Caco-2 (cell line): ENCODE measurements at regions of chr5 and their contacts with region 1.

Region 1: DNA sequence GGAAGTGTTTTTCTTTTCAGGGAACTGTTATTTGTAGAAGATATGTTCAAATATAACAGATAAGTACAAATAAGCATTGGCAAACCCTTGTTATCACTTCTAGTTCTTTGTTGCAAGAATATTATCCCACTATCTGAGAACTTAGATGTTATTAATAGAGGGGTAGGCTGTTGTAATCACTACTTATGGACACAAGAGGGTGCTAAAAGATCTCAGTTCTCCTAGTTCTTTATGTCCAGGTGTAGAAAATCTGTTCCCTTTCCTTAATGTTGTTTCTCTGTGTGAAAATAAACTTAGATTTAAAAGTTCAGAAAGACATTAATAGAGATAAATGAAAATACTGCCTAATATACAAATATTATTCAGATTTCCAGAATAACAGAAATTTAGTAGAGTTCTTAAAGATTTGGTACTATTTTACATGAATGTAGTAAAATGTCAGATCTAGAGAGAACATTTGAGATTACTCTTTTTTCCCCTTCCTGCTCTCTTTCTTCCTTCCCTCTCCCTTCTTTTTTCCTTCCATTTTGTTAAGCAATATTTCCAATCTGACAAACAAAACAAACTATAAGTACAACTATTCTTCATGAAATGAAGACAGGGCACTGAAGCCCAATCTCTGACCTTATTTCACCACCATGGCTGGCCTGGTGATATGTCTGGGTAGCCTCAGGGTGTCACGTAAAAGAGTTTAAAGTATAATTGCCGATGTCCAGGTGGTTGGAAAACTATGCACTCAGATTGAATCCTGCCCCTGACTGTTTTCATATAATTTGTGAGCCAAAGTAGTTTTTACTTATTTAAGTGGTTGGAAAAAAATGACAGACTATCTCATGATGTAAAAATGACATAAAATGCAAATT is 43.6 kb upstream of the C5orf46 start:
- DNase-seq: peak in 1 of 2 experiments; percentile 36
- H3K4me3 ChIP-seq: no peak overlapping the region
- H3K4me3 Mint-ChIP-seq: no peak overlapping the region
- H3K27ac Mint-ChIP-seq: no peak overlapping the region
- H3K4me1 ChIP-seq: no peaks in the 10 kb centered on the region
- H3K4me1 Mint-ChIP-seq: peaks cover 6% of the 10 kb centered on the region
- H3K27me3 ChIP-seq: no peaks in the 10 kb centered on the region
- H3K27me3 Mint-ChIP-seq: no peaks in the 10 kb centered on the region
- CTCF ChIP-seq: peak; percentile 66 to 67

Region 2: DNA sequence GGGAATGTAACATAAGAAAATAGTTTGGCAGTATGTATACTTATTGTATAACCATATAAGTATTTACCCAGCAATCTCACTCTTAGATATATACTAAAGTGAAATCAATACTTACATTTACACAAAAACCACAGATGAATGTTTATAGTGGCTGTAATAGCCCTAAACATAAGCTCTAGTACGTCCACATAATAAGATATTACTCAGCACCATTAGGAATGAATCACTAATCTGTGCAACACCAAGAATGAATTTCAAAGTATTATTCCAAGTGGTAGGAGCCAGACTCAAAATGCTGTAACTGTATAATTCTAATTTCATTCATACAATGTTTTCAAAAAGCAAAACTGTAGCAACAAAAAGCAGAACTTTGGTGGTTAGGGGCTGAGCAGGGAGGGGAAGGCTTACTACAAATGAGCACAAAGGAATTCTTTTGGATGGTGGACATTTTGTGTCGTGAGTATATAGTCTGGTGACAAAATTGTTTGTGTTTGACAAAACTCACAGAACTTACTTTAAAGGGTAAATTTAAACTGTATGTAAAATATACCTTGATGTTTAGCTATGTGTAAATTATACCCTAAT is 31.7 kb before region 1 on chr5:
- CTCF ChIA-PET with region 1: no interaction called
- POLR2A ChIA-PET with region 1: no interaction called
- intact Hi-C with region 1: no loop called
- DNase-seq: no peak
- H3K4me3 ChIP-seq: no peak overlapping the region
- H3K4me3 Mint-ChIP-seq: no peak overlapping the region
- H3K27ac Mint-ChIP-seq: no peak overlapping the region
- H3K4me1 ChIP-seq: no peaks in the 10 kb centered on the region
- H3K4me1 Mint-ChIP-seq: peaks cover 7% of the 10 kb centered on the region
- H3K27me3 ChIP-seq: no peaks in the 10 kb centered on the region
- H3K27me3 Mint-ChIP-seq: no peaks in the 10 kb centered on the region
- CTCF ChIP-seq: no peak

Region 3: GRCh38 chr5:147985608-147986007 is 35.7 kb after region 1 on chr5:
- CTCF ChIA-PET with region 1: no interaction called
- POLR2A ChIA-PET with region 1: no interaction called
- intact Hi-C with region 1: no loop called
- DNase-seq: no peak
- H3K4me3 ChIP-seq: no peak overlapping the region
- H3K4me3 Mint-ChIP-seq: no peak overlapping the region
- H3K27ac Mint-ChIP-seq: no peak overlapping the region
- H3K4me1 ChIP-seq: no peaks in the 10 kb centered on the region
- H3K4me1 Mint-ChIP-seq: no peaks in the 10 kb centered on the region
- H3K27me3 ChIP-seq: no peaks in the 10 kb centered on the region
- H3K27me3 Mint-ChIP-seq: no peaks in the 10 kb centered on the region
- CTCF ChIP-seq: no peak

Region 4: DNA sequence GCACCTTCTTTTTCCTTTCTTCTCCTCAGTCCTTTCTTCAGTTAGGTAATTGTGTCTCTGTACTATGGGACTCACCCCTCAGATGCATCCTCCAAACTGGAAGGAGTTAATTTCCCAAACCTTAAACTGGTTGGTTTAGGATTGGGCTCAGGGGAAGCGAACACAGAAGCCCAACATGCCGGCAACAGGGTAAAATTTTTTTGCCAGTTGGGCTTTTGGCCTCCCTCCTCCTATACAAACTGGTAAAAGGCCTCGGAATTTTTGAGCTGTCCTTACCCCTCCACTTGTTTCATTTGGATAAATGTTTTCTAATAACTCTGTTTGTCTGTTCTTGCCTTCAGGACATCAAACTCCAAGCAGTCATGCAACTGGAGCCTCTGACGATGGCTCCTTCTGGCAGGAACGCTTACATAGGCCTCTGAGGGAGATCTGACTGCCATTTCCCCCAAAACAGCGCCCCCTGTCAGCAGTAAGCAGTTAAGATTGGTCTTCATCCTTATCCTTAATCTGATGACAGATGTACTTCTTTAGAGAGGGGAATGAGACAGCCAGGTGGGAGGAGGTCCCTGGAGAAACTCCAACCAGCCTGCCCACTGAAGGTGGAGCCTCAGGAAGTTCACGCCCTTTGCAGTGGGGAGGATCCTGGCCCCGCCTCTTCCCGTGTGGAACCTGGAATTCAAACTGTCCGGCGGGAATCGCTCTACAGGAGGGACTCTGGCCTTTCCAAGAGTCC is 56.0 kb after region 1 on chr5:
- CTCF ChIA-PET with region 1: no interaction called
- POLR2A ChIA-PET with region 1: no interaction called
- intact Hi-C with region 1: loop called (anchors 2 kb)
- DNase-seq: peak in 1 of 2 experiments; percentile 5
- H3K4me3 ChIP-seq: no peak overlapping the region
- H3K4me3 Mint-ChIP-seq: no peak overlapping the region
- H3K27ac Mint-ChIP-seq: no peak overlapping the region
- H3K4me1 ChIP-seq: no peaks in the 10 kb centered on the region
- H3K4me1 Mint-ChIP-seq: no peaks in the 10 kb centered on the region
- H3K27me3 ChIP-seq: no peaks in the 10 kb centered on the region
- H3K27me3 Mint-ChIP-seq: no peaks in the 10 kb centered on the region
- CTCF ChIP-seq: peak in 1 of 2 experiments; percentile 18

Region 5: GRCh38 chr5:148090773-148091221 is 140.9 kb after region 1 on chr5:
- CTCF ChIA-PET with region 1: no interaction called
- POLR2A ChIA-PET with region 1: no interaction called
- intact Hi-C with region 1: no loop called
- DNase-seq: peak in 1 of 2 experiments; percentile 3
- H3K4me3 ChIP-seq: no peak overlapping the region
- H3K4me3 Mint-ChIP-seq: peak overlapping the region; percentile 60
- H3K27ac Mint-ChIP-seq: no peak overlapping the region
- H3K4me1 ChIP-seq: peaks cover 11% of the 10 kb centered on the region; the same call in 1 of the 2 replicates
- H3K4me1 Mint-ChIP-seq: peaks cover 12% of the 10 kb centered on the region
- H3K27me3 ChIP-seq: no peaks in the 10 kb centered on the region
- H3K27me3 Mint-ChIP-seq: no peaks in the 10 kb centered on the region
- CTCF ChIP-seq: no peak